PC-3 (cell line): ENCODE measurements at regions of chr7 and their contacts with region 1.

Region 1: DNA sequence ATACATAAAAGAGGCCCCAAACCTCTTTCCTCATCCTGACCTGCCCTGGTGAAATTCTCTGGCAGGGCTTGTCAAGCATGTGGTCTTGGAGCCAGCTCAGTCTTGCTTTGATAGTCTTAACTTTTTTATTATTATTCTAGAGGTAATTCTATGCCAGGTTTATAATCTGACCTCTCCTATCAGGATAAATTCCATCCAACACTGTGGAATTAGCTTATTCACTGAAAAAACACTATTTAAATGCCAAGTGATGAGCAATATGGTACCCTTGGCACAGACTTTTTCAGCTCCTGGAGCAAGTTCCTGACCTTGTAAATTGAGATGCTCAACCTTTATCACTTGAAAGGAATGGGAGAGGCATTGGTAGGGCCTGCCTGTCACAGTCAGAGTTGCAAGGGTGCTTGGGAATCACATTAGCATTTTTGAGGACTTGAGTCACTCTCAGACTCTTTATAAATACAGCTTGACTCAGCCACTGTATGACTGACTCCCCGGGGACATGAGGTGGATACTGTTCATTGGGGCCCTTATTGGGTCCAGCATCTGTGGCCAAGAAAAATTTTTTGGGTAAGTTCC is at the start of gene CPA4:
- DNase-seq: peak; percentile 97
- ATAC-seq: peak; percentile 97
- H3K4me3 ChIP-seq: peak within 1 kb of the TSS; percentile 38
- H3K27ac ChIP-seq: peak within 1 kb of the TSS; percentile 66
- H3K4me1 ChIP-seq: peaks cover 44% of the 10 kb centered on the region
- H3K27me3 ChIP-seq: no peaks in the 10 kb centered on the region
- CTCF ChIP-seq: no peak
- total RNA-seq, gene CPA4: 10.1 and 22.1 TPM in 2 replicates

Region 2: GRCh38 chr7:130205084-130205947 is 87.5 kb before region 1 on chr7 and contains the start of gene TMEM209:
- CTCF ChIA-PET with region 1: no interaction called
- POLR2A ChIA-PET with region 1: interaction called, 13 read pairs
- intact Hi-C with region 1: no loop called
- DNase-seq: peak; percentile 96
- ATAC-seq: peak; percentile 96
- H3K4me3 ChIP-seq: peak within 1 kb of the TSS; percentile 81
- H3K27ac ChIP-seq: peak within 1 kb of the TSS; percentile 83
- H3K4me1 ChIP-seq: peaks cover 14% of the 10 kb centered on the region
- H3K27me3 ChIP-seq: no peaks in the 10 kb centered on the region
- CTCF ChIP-seq: no peak
- total RNA-seq, gene TMEM209: 17.7 and 23.2 TPM in 2 replicates

Region 3: GRCh38 chr7:130356121-130356875 is 63.5 kb after region 1 on chr7:
- CTCF ChIA-PET with region 1: no interaction called
- POLR2A ChIA-PET with region 1: no interaction called
- intact Hi-C with region 1: loop called (anchors 2 kb)
- DNase-seq: peak; percentile 97
- ATAC-seq: peak; percentile 89
- H3K4me3 ChIP-seq: peak overlapping the region; percentile 38; the same call in 1 of the 2 replicates
- H3K27ac ChIP-seq: peak overlapping the region; percentile 92
- H3K4me1 ChIP-seq: peaks cover 37% of the 10 kb centered on the region
- H3K27me3 ChIP-seq: no peaks in the 10 kb centered on the region
- CTCF ChIP-seq: no peak

Region 4: GRCh38 chr7:130752424-130752823 is 459.7 kb after region 1 on chr7:
- CTCF ChIA-PET with region 1: no interaction called
- POLR2A ChIA-PET with region 1: interaction called, 13 read pairs
- intact Hi-C with region 1: no loop called
- DNase-seq: no peak
- ATAC-seq: no peak
- H3K4me3 ChIP-seq: no peak overlapping the region
- H3K27ac ChIP-seq: no peak overlapping the region
- H3K4me1 ChIP-seq: no peaks in the 10 kb centered on the region
- H3K27me3 ChIP-seq: peaks cover 40% of the 10 kb centered on the region
- CTCF ChIP-seq: no peak